Activated B cell treated with CpG ODN at 0.5 μM for 24 hours (primary cell): ENCODE measurements at regions of chr19 and their contacts with region 1.

Region 1: GRCh38 chr19:47112997-47113849 is at the start of gene ZC3H4:
- DNase-seq: peak; percentile 98
- ATAC-seq: peak; percentile 82
- H3K4me3 Mint-ChIP-seq: peak within 1 kb of the TSS; percentile 100
- H3K27ac Mint-ChIP-seq: peak within 1 kb of the TSS; percentile 100
- H3K4me1 Mint-ChIP-seq: peaks cover 38% of the 10 kb centered on the region
- H3K27me3 Mint-ChIP-seq: no peaks in the 10 kb centered on the region
- CTCF ChIP-seq: no peak
- total RNA-seq, gene ZC3H4: 83.8 and 89.1 TPM in 2 replicates

Region 2: DNA sequence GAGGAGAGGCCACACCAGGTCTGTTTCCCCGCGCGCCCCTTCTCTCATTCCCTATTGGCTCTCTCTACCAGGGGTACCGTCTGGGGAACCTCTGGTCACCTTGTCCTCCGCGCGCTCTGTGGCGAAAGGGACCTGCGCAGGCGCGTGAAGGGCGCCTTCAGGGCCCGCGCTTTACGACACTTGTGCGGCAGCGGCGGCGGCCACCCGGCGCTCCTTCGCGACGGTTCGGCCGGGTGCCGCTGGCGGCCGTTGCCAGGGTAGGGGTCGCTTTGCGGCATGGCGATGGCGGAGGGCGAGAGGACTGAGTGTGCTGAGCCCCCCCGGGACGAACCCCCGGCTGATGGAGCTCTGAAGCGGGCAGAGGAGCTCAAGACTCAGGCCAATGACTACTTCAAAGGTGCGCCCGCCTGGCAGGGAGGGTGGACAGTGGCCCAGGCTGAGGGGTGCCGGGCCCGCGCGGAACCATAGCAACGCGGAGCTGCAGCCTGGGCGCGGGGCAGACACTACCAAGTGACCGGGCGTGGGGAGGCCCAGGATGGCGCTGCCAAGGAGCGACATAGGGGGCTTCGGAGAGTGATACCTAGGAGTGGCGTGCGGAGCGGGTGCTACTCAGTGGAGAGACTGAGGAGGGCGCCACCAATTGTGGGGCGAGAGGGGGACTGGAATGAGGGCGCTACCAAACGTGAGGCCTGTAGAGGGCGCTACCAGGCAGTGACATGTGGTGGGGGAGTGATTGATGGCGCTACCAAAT is 766.2 kb before region 1 on chr19 and contains the start of gene PPP5C:
- CTCF ChIA-PET with region 1: no interaction called
- POLR2A ChIA-PET with region 1: no interaction called
- intact Hi-C with region 1: loop called (anchors 2 kb)
- DNase-seq: peak; percentile 84
- ATAC-seq: peak; percentile 81
- H3K4me3 Mint-ChIP-seq: peak within 1 kb of the TSS; percentile 95
- H3K27ac Mint-ChIP-seq: peak within 1 kb of the TSS; percentile 88
- H3K4me1 Mint-ChIP-seq: peaks cover 54% of the 10 kb centered on the region
- H3K27me3 Mint-ChIP-seq: peaks cover 3% of the 10 kb centered on the region
- CTCF ChIP-seq: no peak
- total RNA-seq, gene PPP5C: 49.1 and 57.7 TPM in 2 replicates

Region 3: DNA sequence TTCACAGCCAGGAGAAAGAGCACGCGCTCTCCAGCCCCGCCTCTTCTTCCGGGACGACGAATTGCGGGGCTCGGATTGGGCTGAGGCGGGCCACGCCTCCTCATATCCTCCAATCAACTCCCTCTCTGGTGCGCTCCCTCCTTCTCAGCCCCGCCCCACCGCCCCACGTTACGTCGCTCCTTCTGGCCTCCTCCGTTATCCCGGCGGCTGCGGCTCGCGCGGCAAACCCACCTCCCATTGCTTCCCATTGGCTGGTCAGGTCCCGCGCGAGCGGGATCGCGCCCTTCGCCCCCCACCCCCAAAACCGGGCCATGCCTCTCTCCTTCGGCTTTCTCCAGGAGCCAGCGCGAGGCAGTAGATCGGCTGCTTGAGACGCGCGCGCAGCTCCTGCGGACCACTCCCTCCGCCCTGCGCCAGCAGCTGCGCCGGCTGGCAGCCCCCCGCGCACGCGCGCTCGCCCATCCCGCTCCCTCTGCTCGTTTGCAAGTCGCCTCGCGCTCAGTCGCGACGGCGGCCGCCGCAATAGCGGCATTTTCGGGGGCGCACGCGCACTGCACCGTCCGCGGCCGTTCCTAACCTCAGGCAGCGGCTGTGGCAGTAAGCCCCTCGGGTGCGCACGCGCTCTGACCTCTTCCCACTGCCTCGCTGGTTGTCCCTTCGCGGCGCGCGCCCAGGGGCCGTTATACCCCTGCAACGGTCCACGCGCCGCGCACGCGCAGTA is 252.9 kb before region 1 on chr19:
- CTCF ChIA-PET with region 1: no interaction called
- POLR2A ChIA-PET with region 1: interaction called, 3 read pairs
- intact Hi-C with region 1: loop called (anchors 1 kb)
- DNase-seq: peak; percentile 87
- ATAC-seq: peak; percentile 79
- H3K4me3 Mint-ChIP-seq: peak overlapping the region; percentile 92
- H3K27ac Mint-ChIP-seq: peak overlapping the region; percentile 92
- H3K4me1 Mint-ChIP-seq: peaks cover 26% of the 10 kb centered on the region
- H3K27me3 Mint-ChIP-seq: no peaks in the 10 kb centered on the region
- CTCF ChIP-seq: no peak

Region 4: GRCh38 chr19:47069795-47070194 is 43.4 kb before region 1 on chr19:
- CTCF ChIA-PET with region 1: no interaction called
- POLR2A ChIA-PET with region 1: no interaction called
- intact Hi-C with region 1: no loop called
- DNase-seq: no peak
- ATAC-seq: no peak
- H3K4me3 Mint-ChIP-seq: no peak overlapping the region
- H3K27ac Mint-ChIP-seq: no peak overlapping the region
- H3K4me1 Mint-ChIP-seq: no peaks in the 10 kb centered on the region
- H3K27me3 Mint-ChIP-seq: no peaks in the 10 kb centered on the region
- CTCF ChIP-seq: no peak

Region 5: GRCh38 chr19:47094557-47095475 is 18.4 kb before region 1 on chr19:
- CTCF ChIA-PET with region 1: no interaction called
- POLR2A ChIA-PET with region 1: interaction called, 97 read pairs
- intact Hi-C with region 1: loop called (anchors 1 kb)
- DNase-seq: no peak
- ATAC-seq: no peak
- H3K4me3 Mint-ChIP-seq: peak overlapping the region; percentile 55
- H3K27ac Mint-ChIP-seq: peak overlapping the region; percentile 68
- H3K4me1 Mint-ChIP-seq: peaks cover 44% of the 10 kb centered on the region
- H3K27me3 Mint-ChIP-seq: no peaks in the 10 kb centered on the region
- CTCF ChIP-seq: no peak

Region 6: GRCh38 chr19:47157431-47158321 is 44.5 kb after region 1 on chr19:
- CTCF ChIA-PET with region 1: no interaction called
- POLR2A ChIA-PET with region 1: interaction called, 13 read pairs
- intact Hi-C with region 1: no loop called
- DNase-seq: no peak
- ATAC-seq: peak; percentile 47
- H3K4me3 Mint-ChIP-seq: peak overlapping the region; percentile 41
- H3K27ac Mint-ChIP-seq: peak overlapping the region; percentile 75
- H3K4me1 Mint-ChIP-seq: peaks cover 32% of the 10 kb centered on the region
- H3K27me3 Mint-ChIP-seq: no peaks in the 10 kb centered on the region
- CTCF ChIP-seq: no peak

Region 7: DNA sequence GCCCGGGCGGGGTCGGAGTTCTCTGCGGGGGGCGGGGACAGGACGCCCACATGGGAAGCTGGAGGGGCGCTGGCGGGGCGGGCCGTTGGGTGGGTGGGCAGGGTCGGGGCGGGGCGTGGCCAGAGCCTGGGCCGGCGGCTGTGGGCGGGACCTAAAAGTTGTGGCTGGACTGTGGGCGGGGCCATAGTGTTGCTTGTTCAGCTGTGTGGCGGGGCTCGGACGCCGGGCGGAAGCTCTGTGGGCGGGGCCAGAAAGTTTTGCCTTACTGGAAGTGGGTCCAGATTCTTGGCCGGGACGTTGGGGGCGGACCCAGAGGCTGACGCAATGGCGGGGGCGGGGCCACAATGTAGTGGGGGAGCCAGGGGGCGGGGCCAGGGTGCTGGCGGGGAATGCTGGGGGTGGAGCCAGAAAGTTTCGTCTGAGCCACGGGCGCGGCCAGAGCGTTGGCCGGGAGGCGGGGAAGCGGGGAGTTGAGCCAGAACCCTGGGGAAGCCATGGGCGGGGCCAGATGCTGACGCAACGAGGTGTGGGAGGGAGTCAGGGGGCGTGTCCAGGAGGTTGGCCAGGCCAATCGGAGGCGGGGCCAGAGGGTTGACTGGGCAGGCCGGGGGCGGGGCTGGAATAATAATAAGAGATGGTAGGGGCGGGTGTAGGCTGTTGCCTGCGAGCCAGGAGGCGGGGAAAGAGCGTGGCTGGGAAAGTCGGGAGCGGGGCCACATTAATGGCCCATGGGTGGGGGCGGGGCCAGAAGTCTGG is 143.6 kb after region 1 on chr19:
- CTCF ChIA-PET with region 1: no interaction called
- POLR2A ChIA-PET with region 1: interaction called, 37 read pairs
- intact Hi-C with region 1: loop called (anchors 1 kb)
- DNase-seq: peak; percentile 99
- ATAC-seq: peak; percentile 82
- H3K4me3 Mint-ChIP-seq: peak overlapping the region; percentile 93
- H3K27ac Mint-ChIP-seq: peak overlapping the region; percentile 92
- H3K4me1 Mint-ChIP-seq: peaks cover 39% of the 10 kb centered on the region
- H3K27me3 Mint-ChIP-seq: no peaks in the 10 kb centered on the region
- CTCF ChIP-seq: no peak